Activated CD4-positive, alpha-beta memory T cell treated with anti-CD3 and anti-CD28 coated beads for 36 hours (primary cell): ENCODE measurements at regions of chr18 and their contacts with region 1.

Region 1: DNA sequence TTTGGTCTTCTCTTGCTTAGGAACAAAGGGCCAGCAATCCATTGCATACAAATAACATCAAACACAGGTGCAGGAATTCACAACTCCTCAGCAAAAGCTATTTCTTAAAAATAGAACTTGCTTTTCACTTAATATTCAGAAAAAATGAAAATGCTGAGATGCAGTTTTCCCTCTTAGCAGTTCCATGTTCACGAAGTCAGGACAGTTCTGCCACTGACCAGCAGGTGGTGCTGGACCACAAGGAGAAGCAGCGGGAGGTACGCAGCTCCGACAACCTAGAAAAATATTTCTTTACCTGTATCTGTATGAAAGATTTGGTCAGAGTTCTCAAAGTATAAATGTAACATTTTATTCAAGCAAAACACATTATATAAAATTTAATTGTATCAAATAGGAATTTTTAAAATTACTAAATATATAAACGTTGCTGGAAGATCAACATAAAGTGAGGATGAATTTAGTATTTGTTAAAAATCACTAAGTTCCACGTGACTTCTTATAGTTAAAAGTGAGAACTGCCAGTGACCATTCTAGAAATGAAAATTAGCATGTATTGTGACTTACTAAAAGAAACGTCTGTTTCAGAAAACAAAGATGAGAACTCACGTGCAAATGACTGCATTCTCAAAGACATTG is 48.8 kb downstream of the ADNP2 start:
- DNase-seq: peak; percentile 85
- H3K4me3 Mint-ChIP-seq: no peak overlapping the region
- H3K27ac Mint-ChIP-seq: no peak overlapping the region
- H3K4me1 Mint-ChIP-seq: peaks cover 12% of the 10 kb centered on the region
- H3K27me3 Mint-ChIP-seq: peaks cover 20% of the 10 kb centered on the region

Region 2: DNA sequence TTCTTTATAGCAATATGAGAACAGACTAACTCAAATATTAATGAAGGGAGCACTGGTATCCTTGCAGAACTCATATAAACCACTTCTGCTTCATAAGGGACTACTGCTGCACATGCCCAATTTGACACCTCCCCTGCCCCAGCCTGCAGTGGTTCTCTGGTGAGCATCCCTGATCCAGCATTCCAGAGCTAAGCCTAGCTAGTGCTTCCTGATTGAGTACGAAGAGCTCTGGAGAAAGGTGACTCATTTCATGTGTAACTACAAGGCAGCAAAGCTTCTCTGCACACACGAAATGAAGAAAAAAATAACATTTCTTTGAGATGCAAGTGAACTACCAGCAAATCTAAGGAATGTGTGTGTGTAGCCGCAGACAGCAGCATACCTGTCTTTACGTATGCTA is 71.5 kb before region 1 on chr18:
- CTCF ChIA-PET with region 1: no interaction called
- POLR2A ChIA-PET with region 1: no interaction called
- intact Hi-C with region 1: no loop called
- DNase-seq: no peak
- H3K4me3 Mint-ChIP-seq: no peak overlapping the region
- H3K27ac Mint-ChIP-seq: no peak overlapping the region
- H3K4me1 Mint-ChIP-seq: no peaks in the 10 kb centered on the region
- H3K27me3 Mint-ChIP-seq: peaks cover 15% of the 10 kb centered on the region

Region 3: DNA sequence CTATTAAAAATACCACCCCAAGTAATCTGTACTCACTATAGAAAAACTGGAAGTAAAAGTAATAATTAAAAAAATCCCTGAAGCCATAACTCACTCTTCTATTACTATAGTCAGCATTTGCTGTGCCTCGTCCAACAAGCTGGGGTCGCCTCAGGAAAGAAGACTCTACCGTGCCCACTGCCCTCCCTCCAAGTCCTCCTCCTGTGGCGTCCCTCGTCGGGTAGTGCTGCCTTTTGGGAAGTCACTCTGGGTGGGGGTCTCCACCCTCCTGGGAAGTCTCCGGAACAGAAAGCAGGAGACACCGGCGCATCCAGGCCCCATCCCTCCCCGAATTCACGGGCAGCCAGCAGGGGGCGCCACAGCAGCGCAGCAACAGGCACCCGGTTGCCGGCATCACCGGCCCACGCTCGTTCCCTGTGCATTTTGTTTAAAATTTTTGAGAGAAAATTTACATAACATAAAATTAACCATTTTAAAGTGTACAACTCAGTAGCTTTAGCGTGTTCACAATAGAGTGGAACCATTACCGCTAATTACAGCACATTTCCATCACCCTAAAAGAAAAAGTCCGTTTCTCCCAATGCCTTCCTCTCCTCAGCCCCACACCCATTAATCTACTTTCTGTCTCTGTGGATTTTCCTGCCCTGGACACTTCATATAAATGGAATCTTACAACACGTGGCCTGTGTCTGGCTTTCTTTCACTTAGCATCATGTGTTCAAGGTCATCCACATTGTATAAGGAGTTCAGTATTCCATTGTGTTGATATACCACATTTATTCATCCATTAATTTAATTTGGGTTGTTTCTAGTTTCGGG is 13.4 kb after region 1 on chr18:
- CTCF ChIA-PET with region 1: interaction called, 73 read pairs
- POLR2A ChIA-PET with region 1: no interaction called
- intact Hi-C with region 1: no loop called
- DNase-seq: peak; percentile 71
- H3K4me3 Mint-ChIP-seq: no peak overlapping the region
- H3K27ac Mint-ChIP-seq: no peak overlapping the region
- H3K4me1 Mint-ChIP-seq: peaks cover 16% of the 10 kb centered on the region
- H3K27me3 Mint-ChIP-seq: peaks cover 36% of the 10 kb centered on the region

Region 4: GRCh38 chr18:80200171-80200931 is 42.5 kb after region 1 on chr18:
- CTCF ChIA-PET with region 1: interaction called, 23 read pairs
- POLR2A ChIA-PET with region 1: interaction called, 5 read pairs
- intact Hi-C with region 1: loop called (anchors 1 kb)
- DNase-seq: no peak
- H3K4me3 Mint-ChIP-seq: no peak overlapping the region
- H3K27ac Mint-ChIP-seq: no peak overlapping the region
- H3K4me1 Mint-ChIP-seq: peaks cover 22% of the 10 kb centered on the region
- H3K27me3 Mint-ChIP-seq: peaks cover 57% of the 10 kb centered on the region

Region 5: DNA sequence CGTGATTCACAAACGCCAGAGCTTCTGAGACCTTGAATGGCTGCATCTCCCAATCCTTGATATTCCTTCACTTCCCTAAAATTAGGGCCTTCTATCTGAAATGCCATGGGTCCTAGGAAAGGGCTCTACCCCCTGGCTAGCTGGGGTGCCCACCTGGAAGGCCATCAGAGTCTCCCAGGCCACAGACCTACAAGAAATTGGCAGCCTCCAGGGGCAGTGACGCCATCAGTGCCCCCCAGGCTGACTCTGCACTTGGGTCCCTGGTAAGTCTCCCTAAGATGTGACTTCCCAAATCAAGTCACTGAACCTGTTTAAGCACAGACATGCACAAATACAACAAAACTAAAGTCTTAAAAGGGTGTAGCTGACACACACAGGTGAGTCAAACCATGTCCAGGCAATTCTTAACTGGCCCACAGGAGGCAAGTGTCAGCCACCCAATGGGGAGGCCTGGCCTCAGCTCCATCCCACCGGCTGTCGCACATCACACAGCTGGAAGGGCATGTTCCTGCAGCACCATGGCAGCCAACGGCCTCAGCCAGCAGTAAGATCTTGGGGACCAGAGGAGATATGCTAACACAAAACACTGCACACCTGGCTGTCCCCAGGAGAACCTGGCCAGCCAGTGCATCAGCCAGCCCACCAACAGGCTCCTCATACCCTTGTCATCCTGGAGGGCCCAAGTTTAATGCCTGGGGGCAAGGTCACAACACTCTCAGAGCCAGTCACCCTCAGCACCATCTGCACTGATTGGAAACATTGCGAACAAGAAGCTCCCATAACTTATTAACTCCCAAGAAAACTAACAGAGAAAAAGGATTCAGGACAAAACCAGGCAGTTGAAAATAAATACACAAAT is 84.3 kb after region 1 on chr18:
- CTCF ChIA-PET with region 1: interaction called, 10 read pairs
- POLR2A ChIA-PET with region 1: no interaction called
- intact Hi-C with region 1: no loop called
- DNase-seq: no peak
- H3K4me3 Mint-ChIP-seq: no peak overlapping the region
- H3K27ac Mint-ChIP-seq: no peak overlapping the region
- H3K4me1 Mint-ChIP-seq: peaks cover 5% of the 10 kb centered on the region
- H3K27me3 Mint-ChIP-seq: peaks cover 38% of the 10 kb centered on the region

Region 6: GRCh38 chr18:80253871-80254492 is 96.2 kb after region 1 on chr18:
- CTCF ChIA-PET with region 1: interaction called, 70 read pairs
- POLR2A ChIA-PET with region 1: no interaction called
- intact Hi-C with region 1: no loop called
- DNase-seq: peak; percentile 34
- H3K4me3 Mint-ChIP-seq: no peak overlapping the region
- H3K27ac Mint-ChIP-seq: no peak overlapping the region
- H3K4me1 Mint-ChIP-seq: no peaks in the 10 kb centered on the region
- H3K27me3 Mint-ChIP-seq: peaks cover 7% of the 10 kb centered on the region

Region 7: DNA sequence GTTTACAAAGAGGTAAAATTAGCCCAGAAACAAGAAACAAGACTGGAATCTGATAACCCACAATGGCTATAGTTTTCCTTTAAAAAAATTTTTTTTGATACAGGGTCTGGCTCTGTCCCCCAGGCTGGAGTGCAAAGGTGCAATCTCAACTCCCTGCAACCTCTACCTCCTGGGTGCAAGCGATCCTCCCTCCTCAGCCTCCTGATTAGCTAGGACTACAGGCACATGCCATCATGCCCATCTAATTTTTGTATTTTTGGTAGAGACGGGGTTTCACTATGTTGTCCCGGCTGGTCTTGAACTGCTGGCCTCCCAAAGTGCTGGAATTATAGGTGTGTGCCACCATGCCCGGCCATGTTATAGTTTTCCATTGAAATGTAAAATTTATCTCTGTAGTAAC is 101.8 kb after region 1 on chr18:
- CTCF ChIA-PET with region 1: interaction called, 70 read pairs
- POLR2A ChIA-PET with region 1: no interaction called
- intact Hi-C with region 1: no loop called
- DNase-seq: no peak
- H3K4me3 Mint-ChIP-seq: no peak overlapping the region
- H3K27ac Mint-ChIP-seq: no peak overlapping the region
- H3K4me1 Mint-ChIP-seq: no peaks in the 10 kb centered on the region
- H3K27me3 Mint-ChIP-seq: peaks cover 8% of the 10 kb centered on the region